Panc1 (cell line): ENCODE measurements at regions of chr10 and their contacts with region 1.

Region 1: GRCh38 chr10:94123258-94123995 is 129.7 kb downstream of the PLCE1 start:
- DNase-seq: peak; percentile 90
- ATAC-seq: peak; percentile 95
- H3K4me3 ChIP-seq: peak overlapping the region in 1 of 2 experiments; percentile 3; a peak in 2 of 4 replicates
- H3K27ac ChIP-seq: peak overlapping the region; percentile 85
- H3K4me1 ChIP-seq: peaks cover 55% of the 10 kb centered on the region
- H3K27me3 ChIP-seq: no peaks in the 10 kb centered on the region
- CTCF ChIP-seq: no peak

Region 2: DNA sequence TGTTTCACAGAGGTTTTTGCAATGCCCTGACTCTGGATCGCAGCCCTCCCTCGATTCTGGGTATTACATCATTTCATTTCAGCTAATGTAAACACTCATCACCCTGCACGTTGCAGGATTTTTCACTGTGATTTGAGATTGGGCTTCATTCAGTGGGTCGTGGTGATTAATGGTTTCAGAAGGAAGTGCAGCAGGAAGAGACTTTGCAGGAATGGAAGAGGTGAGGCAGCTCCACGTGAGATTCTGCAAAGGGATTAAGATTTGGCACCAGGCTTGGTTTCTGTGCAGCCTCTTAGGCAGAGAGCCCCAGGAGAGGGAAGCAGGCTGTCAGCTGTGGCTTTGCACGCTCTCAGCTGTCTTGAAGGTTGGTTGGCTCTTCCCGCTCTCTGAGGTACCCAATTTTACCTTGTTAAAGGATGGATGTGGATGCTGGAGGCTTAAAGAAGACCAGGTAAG is 34.5 kb before region 1 on chr10:
- CTCF ChIA-PET with region 1: no interaction called
- POLR2A ChIA-PET with region 1: no interaction called
- in situ Hi-C with region 1: no loop called
- intact Hi-C with region 1: no loop called
- DNase-seq: no peak
- ATAC-seq: 0 out of 2 replicates have a peak, but pooled peaks have one; percentile 45
- H3K4me3 ChIP-seq: peak overlapping the region in 1 of 2 experiments; percentile 30; a peak in 2 of 4 replicates
- H3K27ac ChIP-seq: peak overlapping the region; percentile 55; the same call in 1 of the 2 replicates
- H3K4me1 ChIP-seq: peaks cover 69% of the 10 kb centered on the region
- H3K27me3 ChIP-seq: no peaks in the 10 kb centered on the region
- CTCF ChIP-seq: no peak

Region 3: GRCh38 chr10:94108200-94108599 is 15.2 kb before region 1 on chr10:
- CTCF ChIA-PET with region 1: no interaction called
- POLR2A ChIA-PET with region 1: interaction called, 11 read pairs
- in situ Hi-C with region 1: no loop called
- intact Hi-C with region 1: no loop called
- DNase-seq: no peak
- ATAC-seq: peak; percentile 67
- H3K4me3 ChIP-seq: no peak overlapping the region
- H3K27ac ChIP-seq: no peak overlapping the region
- H3K4me1 ChIP-seq: peaks cover 37% of the 10 kb centered on the region
- H3K27me3 ChIP-seq: no peaks in the 10 kb centered on the region
- CTCF ChIP-seq: no peak

Region 4: DNA sequence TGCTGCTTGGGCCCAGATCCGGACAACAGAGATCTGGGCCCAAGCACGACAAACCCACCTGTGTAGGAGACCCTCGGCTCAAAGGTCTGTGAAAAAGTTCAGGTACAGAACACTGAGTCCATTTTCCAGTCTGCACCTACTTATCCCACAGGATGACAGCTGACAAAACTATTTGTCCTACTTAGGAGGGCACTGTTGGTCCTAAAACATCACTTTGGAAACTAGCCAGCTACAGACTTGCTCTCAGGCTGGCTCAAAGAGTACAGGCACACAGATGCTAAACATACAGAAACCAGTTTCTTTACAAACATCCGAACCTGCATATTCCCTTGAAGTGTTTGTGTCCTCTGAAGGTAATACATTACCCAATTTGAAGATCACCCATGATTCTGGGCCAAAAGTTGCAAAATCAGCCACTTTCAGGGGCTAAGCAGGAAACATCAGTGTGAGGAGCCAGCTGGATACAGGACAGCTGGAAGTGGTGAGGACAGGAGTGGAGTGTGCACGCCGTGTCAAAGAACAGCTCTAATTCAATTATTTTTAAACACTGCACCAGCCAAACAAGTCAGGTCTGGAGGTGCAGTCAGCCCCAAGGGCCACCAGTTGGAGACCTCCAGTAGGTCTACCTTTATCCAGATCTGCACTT is 150.8 kb after region 1 on chr10:
- CTCF ChIA-PET with region 1: interaction called, 12 read pairs
- POLR2A ChIA-PET with region 1: no interaction called
- in situ Hi-C with region 1: no loop called
- intact Hi-C with region 1: no loop called
- DNase-seq: no peak
- ATAC-seq: no peak
- H3K4me3 ChIP-seq: no peak overlapping the region
- H3K27ac ChIP-seq: no peak overlapping the region
- H3K4me1 ChIP-seq: no peaks in the 10 kb centered on the region; the same call in 1 of the 2 replicates
- H3K27me3 ChIP-seq: no peaks in the 10 kb centered on the region
- CTCF ChIP-seq: no peak